ENCODE measurements at regions of chr17 and their contacts with region 1.

Region 1: DNA sequence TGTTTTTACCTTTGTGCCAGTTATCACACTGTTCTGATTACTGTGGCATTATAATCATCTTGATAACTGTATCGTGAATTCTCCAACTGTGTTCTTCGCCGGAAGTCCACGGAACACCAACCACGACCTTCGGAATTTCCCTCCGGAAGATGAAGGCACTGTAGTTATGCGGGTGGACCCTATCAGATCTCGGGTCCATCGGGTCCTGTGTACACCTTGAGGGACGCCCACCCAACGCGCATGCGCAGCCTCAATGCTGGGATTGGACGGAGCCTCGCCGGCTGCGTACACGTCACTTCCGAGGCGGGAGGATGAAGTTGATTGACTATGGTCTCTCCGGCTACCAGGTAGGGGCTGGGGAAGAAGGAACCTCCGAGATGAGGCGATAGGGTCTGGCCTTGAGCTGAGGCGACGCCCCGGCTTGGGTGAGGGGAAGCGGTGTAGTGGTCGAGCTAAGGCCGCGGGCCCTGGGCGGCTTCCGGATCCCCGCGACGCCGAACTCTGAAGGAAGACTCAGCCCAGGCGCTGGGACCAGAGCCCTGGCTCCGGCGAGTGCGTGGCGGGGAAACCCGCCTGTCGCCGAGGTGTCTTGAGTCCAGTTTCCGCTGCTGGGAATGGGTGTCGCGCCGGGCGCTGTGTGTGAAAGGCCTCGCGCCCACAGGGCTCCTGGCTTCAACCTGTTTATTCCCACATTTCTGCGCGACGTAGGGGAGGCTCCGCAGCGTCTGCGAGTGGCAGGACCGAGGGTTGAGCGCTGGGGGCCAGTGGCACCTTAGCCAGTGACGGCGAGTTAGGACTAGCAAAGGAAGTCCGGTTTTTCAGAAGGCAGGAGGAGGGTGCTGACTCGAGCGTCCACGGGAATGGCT is at the start of gene DHRS7B:
- DNase-seq: peak; percentile 91 to 97 (median 95)
- ATAC-seq: peak; percentile 90
- H3K4me3 ChIP-seq: peak within 1 kb of the TSS; percentile 86
- H3K4me3 Mint-ChIP-seq: peak within 1 kb of the TSS; percentile 90 to 100 (median 97)
- H3K27ac ChIP-seq: peak within 1 kb of the TSS; percentile 84
- H3K27ac Mint-ChIP-seq: peak within 1 kb of the TSS; percentile 93 to 99 (median 98)
- H3K4me1 ChIP-seq: peaks cover 18 to 19% of the 10 kb centered on the region in 2 donors
- H3K4me1 Mint-ChIP-seq: peaks cover 26 to 58% (median 48%) of the 10 kb centered on the region in 7 donors
- H3K27me3 ChIP-seq: no peaks in the 10 kb centered on the region
- H3K27me3 Mint-ChIP-seq: peaks cover 0 to 10% (median 0%) of the 10 kb centered on the region in 5 donors
- total RNA-seq, gene DHRS7B: 7.5 to 15.1 (median 10.0) TPM

Region 2: GRCh38 chr17:20908373-20909273 is 218.3 kb before region 1 on chr17:
- CTCF ChIA-PET with region 1: no interaction called
- POLR2A ChIA-PET with region 1: no interaction called
- intact Hi-C with region 1: loop called in 1 of 2 experiments (anchors 5 kb)
- DNase-seq: peak; percentile 65 to 80 (median 77)
- ATAC-seq: peak; percentile 98
- H3K4me3 ChIP-seq: peak overlapping the region; percentile 50
- H3K4me3 Mint-ChIP-seq: peak overlapping the region; percentile 68 to 87 (median 82)
- H3K27ac ChIP-seq: peak overlapping the region; percentile 63
- H3K27ac Mint-ChIP-seq: peak overlapping the region in 8 of 9 donors; percentile 66 to 81 (median 74)
- H3K4me1 ChIP-seq: peaks cover 2 to 7% of the 10 kb centered on the region in 2 donors
- H3K4me1 Mint-ChIP-seq: peaks cover 0 to 16% (median 11%) of the 10 kb centered on the region in 7 donors
- H3K27me3 ChIP-seq: no peaks in the 10 kb centered on the region
- H3K27me3 Mint-ChIP-seq: peaks cover under 1 to 25% (median 10%) of the 10 kb centered on the region in 5 donors

Region 3: DNA sequence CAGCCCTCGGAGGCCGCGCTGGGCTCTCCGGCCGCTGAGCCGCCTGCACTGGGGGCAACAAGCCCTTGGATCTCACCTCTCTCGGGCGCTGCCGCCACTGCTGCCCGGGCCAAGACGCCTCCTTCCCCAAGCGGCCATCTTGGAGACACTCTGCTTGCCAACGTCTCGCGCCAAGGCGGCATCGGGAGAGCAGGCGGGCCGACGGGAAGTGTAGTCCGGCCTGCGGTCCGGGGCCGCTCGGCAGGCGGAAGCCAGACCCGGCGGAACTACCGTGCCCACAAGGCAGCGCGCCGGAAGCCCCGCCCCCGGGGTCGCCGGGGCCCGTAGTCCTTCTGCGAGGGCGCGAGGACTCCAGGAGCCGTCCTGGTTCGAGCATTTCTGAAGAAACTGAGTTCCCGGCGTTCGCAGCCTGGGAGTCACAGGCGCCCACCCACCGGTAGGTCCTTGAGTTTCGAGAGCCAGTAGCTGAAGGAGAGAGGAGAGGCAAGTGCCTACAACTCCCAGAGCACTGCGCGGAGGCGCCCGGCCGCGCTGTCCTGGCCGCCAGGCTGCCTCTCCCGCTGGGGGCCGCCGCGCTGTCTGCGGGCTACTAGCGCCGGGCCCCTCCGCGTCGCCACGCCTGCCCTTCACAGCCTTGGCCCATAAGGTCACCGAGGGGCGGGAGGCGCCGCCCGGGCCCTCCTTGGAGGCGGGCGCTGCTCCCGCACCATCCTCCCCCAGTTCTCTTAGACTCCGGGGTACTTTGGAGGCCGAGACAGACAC is 87.3 kb after region 1 on chr17 and contains the start of gene TMEM11:
- CTCF ChIA-PET with region 1: no interaction called
- POLR2A ChIA-PET with region 1: interaction called, 6 read pairs
- intact Hi-C with region 1: loop called (anchors 1 kb)
- DNase-seq: peak; percentile 91 to 97 (median 95)
- ATAC-seq: peak; percentile 96
- H3K4me3 ChIP-seq: peak within 1 kb of the TSS; percentile 93
- H3K4me3 Mint-ChIP-seq: peak within 1 kb of the TSS; percentile 90 to 97 (median 92)
- H3K27ac ChIP-seq: peak within 1 kb of the TSS; percentile 97
- H3K27ac Mint-ChIP-seq: peak within 1 kb of the TSS; percentile 84 to 96 (median 92)
- H3K4me1 ChIP-seq: peaks cover 25 to 32% of the 10 kb centered on the region in 2 donors
- H3K4me1 Mint-ChIP-seq: peaks cover 43 to 74% (median 53%) of the 10 kb centered on the region in 7 donors
- H3K27me3 ChIP-seq: no peaks in the 10 kb centered on the region
- H3K27me3 Mint-ChIP-seq: no peaks in the 10 kb centered on the region
- total RNA-seq, gene TMEM11: 11.7 to 22.9 (median 19.3) TPM

Region 4: GRCh38 chr17:21245639-21246084 is 118.8 kb after region 1 on chr17:
- CTCF ChIA-PET with region 1: no interaction called
- POLR2A ChIA-PET with region 1: no interaction called
- intact Hi-C with region 1: no loop called
- DNase-seq: no peak
- ATAC-seq: no peak
- H3K4me3 ChIP-seq: no peak overlapping the region
- H3K4me3 Mint-ChIP-seq: no peak overlapping the region
- H3K27ac ChIP-seq: no peak overlapping the region
- H3K27ac Mint-ChIP-seq: peak overlapping the region in 4 of 9 donors; percentile 23 to 48 (median 29)
- H3K4me1 ChIP-seq: no peaks in the 10 kb centered on the region
- H3K4me1 Mint-ChIP-seq: peaks cover 5 to 24% (median 17%) of the 10 kb centered on the region in 7 donors
- H3K27me3 ChIP-seq: no peaks in the 10 kb centered on the region
- H3K27me3 Mint-ChIP-seq: peaks cover 0 to 6% (median 0%) of the 10 kb centered on the region in 5 donors

Region 5: GRCh38 chr17:21275579-21276263 is 148.8 kb after region 1 on chr17:
- CTCF ChIA-PET with region 1: interaction called, 5 read pairs
- POLR2A ChIA-PET with region 1: interaction called, 6 read pairs
- intact Hi-C with region 1: loop called in 1 of 2 experiments (anchors 1 kb)
- DNase-seq: peak; percentile 78 to 99 (median 86)
- ATAC-seq: peak; percentile 93
- H3K4me3 ChIP-seq: peak overlapping the region; percentile 71
- H3K4me3 Mint-ChIP-seq: peak overlapping the region; percentile 80 to 99 (median 94)
- H3K27ac ChIP-seq: peak overlapping the region; percentile 91
- H3K27ac Mint-ChIP-seq: peak overlapping the region; percentile 73 to 96 (median 92)
- H3K4me1 ChIP-seq: peaks cover 24 to 40% of the 10 kb centered on the region in 2 donors
- H3K4me1 Mint-ChIP-seq: peaks cover 34 to 52% (median 49%) of the 10 kb centered on the region in 7 donors
- H3K27me3 ChIP-seq: no peaks in the 10 kb centered on the region
- H3K27me3 Mint-ChIP-seq: no peaks in the 10 kb centered on the region

Region 6: GRCh38 chr17:21318439-21318838 is 191.6 kb after region 1 on chr17:
- CTCF ChIA-PET with region 1: no interaction called
- POLR2A ChIA-PET with region 1: no interaction called
- intact Hi-C with region 1: loop called in 1 of 2 experiments (anchors 1 kb)
- DNase-seq: no peak
- ATAC-seq: no peak
- H3K4me3 ChIP-seq: no peak overlapping the region
- H3K4me3 Mint-ChIP-seq: no peak overlapping the region
- H3K27ac ChIP-seq: no peak overlapping the region
- H3K27ac Mint-ChIP-seq: no peak overlapping the region
- H3K4me1 ChIP-seq: no peaks in the 10 kb centered on the region
- H3K4me1 Mint-ChIP-seq: peaks cover 0 to 7% (median 6%) of the 10 kb centered on the region in 7 donors
- H3K27me3 ChIP-seq: no peaks in the 10 kb centered on the region
- H3K27me3 Mint-ChIP-seq: peaks cover 0 to 5% (median 5%) of the 10 kb centered on the region in 5 donors

Region 7: DNA sequence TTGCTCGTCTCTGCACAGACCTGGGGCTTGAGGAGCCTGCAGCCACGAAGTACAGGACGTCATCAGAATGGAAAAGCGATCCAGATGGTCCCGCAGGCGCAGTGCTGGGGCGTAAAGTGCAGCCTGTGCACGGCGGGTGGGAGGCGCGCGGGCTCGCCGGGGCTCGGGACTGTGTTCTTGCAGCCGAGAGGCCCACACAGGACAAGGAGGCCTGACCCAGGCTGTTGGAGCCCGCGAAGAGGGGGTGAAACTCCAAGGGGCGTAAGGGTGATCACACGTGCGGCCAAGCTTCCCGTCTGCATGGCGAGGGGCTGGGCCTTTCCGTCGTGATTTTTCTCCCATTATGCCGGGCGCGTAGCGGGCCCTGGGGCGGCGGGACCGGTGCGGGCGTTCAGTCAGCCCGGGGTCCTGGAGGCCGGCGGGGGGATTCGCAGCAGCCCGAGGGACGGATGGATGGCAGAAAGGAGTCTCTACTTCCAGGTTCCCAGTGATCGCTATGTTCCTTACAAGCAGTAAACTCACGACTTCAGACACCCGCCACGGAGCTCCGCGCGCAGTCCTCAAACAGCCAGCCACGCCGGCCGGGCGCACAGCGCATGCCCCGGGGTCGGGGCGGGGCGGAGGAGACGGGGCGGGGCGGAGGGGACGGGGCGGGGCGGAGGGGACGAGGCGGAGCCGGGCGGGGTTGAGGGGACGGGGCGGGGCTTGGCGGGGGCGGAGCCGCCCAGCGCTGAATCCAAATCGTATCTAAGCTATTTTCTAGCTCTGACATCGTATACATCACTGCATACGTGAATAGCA is 424.4 kb after region 1 on chr17:
- CTCF ChIA-PET with region 1: no interaction called
- POLR2A ChIA-PET with region 1: no interaction called
- intact Hi-C with region 1: loop called in 1 of 2 experiments (anchors 1 kb)
- DNase-seq: peak; percentile 68 to 89 (median 80)
- ATAC-seq: peak; percentile 96
- H3K4me3 ChIP-seq: peak overlapping the region; percentile 69
- H3K4me3 Mint-ChIP-seq: peak overlapping the region; percentile 78 to 91 (median 88)
- H3K27ac ChIP-seq: peak overlapping the region; percentile 69
- H3K27ac Mint-ChIP-seq: peak overlapping the region in 6 of 9 donors; percentile 16 to 66 (median 46)
- H3K4me1 ChIP-seq: peaks cover 0 to 10% of the 10 kb centered on the region in 2 donors
- H3K4me1 Mint-ChIP-seq: peaks cover 24 to 53% (median 41%) of the 10 kb centered on the region in 7 donors
- H3K27me3 ChIP-seq: no peaks in the 10 kb centered on the region
- H3K27me3 Mint-ChIP-seq: peaks cover 17 to 31% (median 27%) of the 10 kb centered on the region in 5 donors

Measured in naive thymus-derived CD4-positive, alpha-beta T cell (primary cell).